Tibial artery (tissue), 4 donors: ENCODE measurements at regions of chr22 and their contacts with region 1.

Region 1: DNA sequence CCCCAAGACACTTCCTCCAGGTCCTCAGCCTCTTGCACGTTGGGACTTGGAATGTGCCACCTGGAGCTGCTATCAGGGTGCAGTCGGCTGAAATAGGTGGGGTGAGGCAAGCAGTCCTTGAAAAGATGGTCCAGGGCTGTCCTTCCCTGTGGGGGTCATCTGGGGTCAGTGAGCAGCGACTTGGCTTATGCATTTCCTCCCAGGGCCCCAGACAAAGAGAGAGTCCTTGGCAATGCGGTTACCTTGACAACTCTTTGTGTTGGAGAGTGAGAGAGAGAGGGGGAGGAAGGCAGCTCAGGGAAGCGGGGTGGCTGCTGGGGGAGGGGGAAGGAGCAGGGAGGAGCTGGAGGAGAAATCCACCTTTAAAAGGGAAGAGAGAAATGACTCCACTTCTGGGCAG is 93.8 kb downstream of the MIAT start:
- DNase-seq: no peak
- H3K4me3 ChIP-seq: no peak overlapping the region
- H3K27ac ChIP-seq: no peak overlapping the region
- H3K4me1 ChIP-seq: no peaks in the 10 kb centered on the region
- H3K27me3 ChIP-seq: no peaks in the 10 kb centered on the region
- CTCF ChIP-seq: no peak

Region 2: GRCh38 chr22:27997538-27997937 is 1246.3 kb after region 1 on chr22:
- intact Hi-C with region 1: loop called (anchors 5 kb)
- DNase-seq: peak in 1 of 2 donors; percentile 41
- H3K4me3 ChIP-seq: no peak overlapping the region
- H3K27ac ChIP-seq: no peak overlapping the region
- H3K4me1 ChIP-seq: no peaks in the 10 kb centered on the region
- H3K27me3 ChIP-seq: no peaks in the 10 kb centered on the region
- CTCF ChIP-seq: no peak